CD4-positive, alpha-beta memory T cell (primary cell): ENCODE measurements at regions of chr4 and their contacts with region 1.

Region 1: DNA sequence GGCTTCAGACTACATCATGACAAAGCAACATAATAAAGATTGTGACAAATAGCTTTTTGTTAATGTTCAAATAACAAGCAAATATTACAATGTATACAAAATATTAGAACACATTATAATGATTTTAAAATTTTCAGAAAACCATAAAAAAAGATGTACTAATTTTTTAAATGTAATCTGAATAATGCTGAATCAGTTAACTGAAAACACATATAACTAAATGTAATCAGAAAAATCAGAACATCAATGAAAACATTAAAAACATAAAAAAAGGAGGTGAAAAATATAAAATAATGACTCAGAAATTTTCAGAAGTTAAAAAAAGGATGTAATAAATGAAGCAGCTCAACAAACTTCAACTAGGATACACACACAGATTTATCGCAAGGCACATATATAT is 53.5 kb downstream of the ZNF721 start:
- DNase-seq: no peak
- H3K4me3 ChIP-seq: no peak overlapping the region
- H3K4me3 Mint-ChIP-seq: no peak overlapping the region
- H3K27ac ChIP-seq: no peak overlapping the region
- H3K27ac Mint-ChIP-seq: no peak overlapping the region
- H3K4me1 ChIP-seq: no peaks in the 10 kb centered on the region
- H3K4me1 Mint-ChIP-seq: no peaks in the 10 kb centered on the region
- H3K27me3 ChIP-seq: no peaks in the 10 kb centered on the region
- H3K27me3 Mint-ChIP-seq: no peaks in the 10 kb centered on the region

Region 2: GRCh38 chr4:373062-373839 is 72.2 kb before region 1 on chr4:
- CTCF ChIA-PET with region 1: no interaction called
- POLR2A ChIA-PET with region 1: no interaction called
- intact Hi-C with region 1: loop called (anchors 10 kb)
- DNase-seq: no peak
- H3K4me3 ChIP-seq: peak overlapping the region in 1 of 2 donors; percentile 35
- H3K4me3 Mint-ChIP-seq: no peak overlapping the region
- H3K27ac ChIP-seq: no peak overlapping the region
- H3K27ac Mint-ChIP-seq: no peak overlapping the region
- H3K4me1 ChIP-seq: no peaks in the 10 kb centered on the region
- H3K4me1 Mint-ChIP-seq: no peaks in the 10 kb centered on the region
- H3K27me3 ChIP-seq: no peaks in the 10 kb centered on the region
- H3K27me3 Mint-ChIP-seq: no peaks in the 10 kb centered on the region

Region 3: GRCh38 chr4:498328-498904 is 53.0 kb after region 1 on chr4:
- CTCF ChIA-PET with region 1: no interaction called
- POLR2A ChIA-PET with region 1: no interaction called
- intact Hi-C with region 1: no loop called
- DNase-seq: no peak
- H3K4me3 ChIP-seq: peak overlapping the region in 1 of 2 donors; percentile 88
- H3K4me3 Mint-ChIP-seq: peak overlapping the region; percentile 92 to 95 (median 93)
- H3K27ac ChIP-seq: peak overlapping the region; percentile 89
- H3K27ac Mint-ChIP-seq: peak overlapping the region; percentile 93 to 97 (median 96)
- H3K4me1 ChIP-seq: peaks cover 22% of the 10 kb centered on the region
- H3K4me1 Mint-ChIP-seq: peaks cover 25 to 65% (median 47%) of the 10 kb centered on the region in 4 donors
- H3K27me3 ChIP-seq: no peaks in the 10 kb centered on the region
- H3K27me3 Mint-ChIP-seq: no peaks in the 10 kb centered on the region